Right ventricle myocardium superior (tissue), 1 donor: ENCODE measurements at regions of chr1 and their contacts with region 1.

Region 1: GRCh38 chr1:19661721-19662228 is 2.9 kb upstream of the HTR6 start:
- DNase-seq: no peak
- ATAC-seq: peak; percentile 25

Region 2: DNA sequence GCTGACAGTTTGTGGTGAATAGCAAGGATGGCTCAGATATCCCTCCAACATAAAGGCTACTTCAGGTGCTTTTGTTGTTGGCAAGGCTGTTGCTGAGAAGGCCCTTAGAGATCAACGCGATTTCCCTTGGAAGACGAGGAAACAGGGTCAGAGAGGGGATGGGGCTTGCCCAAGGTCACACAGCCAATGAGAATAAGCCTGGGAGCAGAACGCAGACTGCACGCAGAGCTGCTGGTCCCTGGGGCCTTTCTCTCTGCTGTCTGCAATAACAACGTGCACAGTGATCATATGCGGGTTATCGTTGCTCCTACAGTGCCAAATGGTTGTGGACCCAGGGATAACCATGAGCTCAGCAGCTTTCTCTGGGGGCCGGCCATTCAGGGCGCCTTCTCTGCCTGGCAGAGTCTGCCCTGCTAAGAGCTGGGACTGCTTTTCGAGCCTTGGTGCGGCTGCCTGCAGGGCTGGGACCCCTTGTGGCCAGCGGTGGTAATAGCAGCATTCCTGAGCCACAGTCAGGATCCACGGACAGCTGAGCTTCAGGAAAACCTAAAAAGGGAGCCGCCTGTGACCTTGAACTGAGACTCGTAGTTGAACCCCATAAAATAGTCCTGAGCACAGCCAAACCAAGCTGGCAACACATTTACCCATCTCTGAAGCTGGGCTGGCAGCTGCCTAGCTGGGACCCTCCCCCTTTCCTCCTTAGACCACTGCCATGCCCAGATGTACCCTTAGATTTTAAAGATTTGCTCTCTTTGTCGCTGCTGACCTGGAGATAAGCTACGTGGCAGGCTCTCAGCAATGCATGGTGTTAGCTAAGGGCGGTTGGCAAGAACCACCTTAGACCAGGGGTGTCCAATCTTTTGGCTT is 42.7 kb after region 1 on chr1:
- intact Hi-C with region 1: loop called (anchors 5 kb)
- DNase-seq: peak; percentile 82
- ATAC-seq: peak; percentile 93

Region 3: DNA sequence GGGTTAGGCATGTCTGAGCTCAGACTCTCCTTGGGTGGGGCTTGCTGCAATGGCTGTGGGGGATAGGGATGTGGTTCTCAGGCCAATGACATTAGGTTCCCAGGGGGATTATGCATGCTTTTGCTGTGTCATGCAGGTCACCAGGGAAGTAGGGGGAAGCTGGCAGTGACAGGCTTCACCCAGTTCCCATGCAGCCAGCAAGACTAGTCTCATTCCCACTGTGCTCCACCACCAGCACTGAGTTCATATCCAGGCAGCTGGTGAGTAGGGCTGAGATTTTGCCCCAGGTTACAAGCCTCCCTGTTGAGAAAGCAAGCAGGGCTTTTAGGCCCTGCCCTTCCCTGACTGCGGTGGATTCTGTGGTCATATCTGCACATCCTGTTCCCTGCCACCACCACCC is 376.1 kb after region 1 on chr1:
- intact Hi-C with region 1: no loop called
- DNase-seq: no peak
- ATAC-seq: no peak